GM18951 (cell line): ENCODE measurements at regions of chr1 and their contacts with region 1.

Region 1: GRCh38 chr1:156383023-156383422 is 14.0 kb downstream of the RHBG start:
- POLR2A ChIP-seq: no peak

Region 2: GRCh38 chr1:155929057-155929456 is 454.0 kb before region 1 on chr1:
- in situ Hi-C with region 1: no loop called
- POLR2A ChIP-seq: no peak

Region 3: DNA sequence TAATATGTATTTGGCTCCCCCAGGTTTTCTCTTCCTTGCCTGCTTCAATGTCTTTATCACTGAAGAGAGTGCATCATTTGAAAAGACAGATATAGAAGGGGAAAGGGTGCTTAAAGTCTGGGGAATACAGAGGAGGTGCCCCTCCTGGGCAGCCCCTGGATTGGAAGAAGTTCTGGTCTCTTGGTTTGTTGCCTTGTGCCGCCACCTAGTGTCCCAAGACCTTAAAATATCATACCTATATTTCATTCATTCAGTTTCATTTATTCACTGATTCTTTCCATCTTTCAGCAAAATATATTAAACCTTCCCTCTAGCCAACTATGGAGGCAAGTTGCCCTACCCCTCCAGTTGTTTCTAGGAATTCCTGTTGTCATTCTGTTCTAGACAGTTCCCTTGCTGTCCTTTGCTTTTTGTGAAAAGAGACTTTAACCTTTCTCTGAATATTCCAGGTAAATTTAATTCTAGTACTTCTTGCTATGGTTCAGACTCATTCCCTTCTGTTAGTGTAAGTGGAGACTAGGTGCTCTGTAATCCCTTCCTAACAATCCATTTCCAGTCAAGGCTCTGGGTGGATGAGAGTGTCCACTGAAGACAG is 61.5 kb after region 1 on chr1:
- in situ Hi-C with region 1: loop called (anchors 5 kb)
- POLR2A ChIP-seq: no peak

Region 4: GRCh38 chr1:156618853-156619581 is 236.0 kb after region 1 on chr1 and contains the start of gene HAPLN2:
- in situ Hi-C with region 1: loop called (anchors 10 kb)
- POLR2A ChIP-seq: no peak